RWPE1 (cell line): ENCODE measurements at regions of chr11 and their contacts with region 1.

Region 1: DNA sequence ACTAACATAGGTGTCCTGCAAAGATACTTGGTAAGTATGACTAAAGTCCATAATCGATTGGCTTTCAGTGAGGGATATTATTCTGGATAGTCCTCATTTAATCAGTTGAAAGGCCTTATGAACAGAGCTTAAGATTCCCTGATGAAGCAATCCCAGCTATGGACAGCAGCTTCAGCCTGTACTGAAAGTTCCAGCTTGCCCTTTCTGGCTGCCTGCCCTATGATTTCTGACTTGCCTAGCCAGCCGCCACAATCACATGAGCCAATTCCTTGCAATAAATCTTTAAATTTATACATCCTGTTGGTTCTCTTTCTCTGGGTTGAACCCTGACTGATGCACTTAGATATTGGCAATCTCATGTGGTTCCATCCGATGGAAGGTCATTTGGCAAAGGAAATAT is 759.0 kb upstream of the API5 start:
- DNase-seq: no peak
- H3K27ac ChIP-seq: no peak overlapping the region
- CTCF ChIP-seq: no peak

Region 2: DNA sequence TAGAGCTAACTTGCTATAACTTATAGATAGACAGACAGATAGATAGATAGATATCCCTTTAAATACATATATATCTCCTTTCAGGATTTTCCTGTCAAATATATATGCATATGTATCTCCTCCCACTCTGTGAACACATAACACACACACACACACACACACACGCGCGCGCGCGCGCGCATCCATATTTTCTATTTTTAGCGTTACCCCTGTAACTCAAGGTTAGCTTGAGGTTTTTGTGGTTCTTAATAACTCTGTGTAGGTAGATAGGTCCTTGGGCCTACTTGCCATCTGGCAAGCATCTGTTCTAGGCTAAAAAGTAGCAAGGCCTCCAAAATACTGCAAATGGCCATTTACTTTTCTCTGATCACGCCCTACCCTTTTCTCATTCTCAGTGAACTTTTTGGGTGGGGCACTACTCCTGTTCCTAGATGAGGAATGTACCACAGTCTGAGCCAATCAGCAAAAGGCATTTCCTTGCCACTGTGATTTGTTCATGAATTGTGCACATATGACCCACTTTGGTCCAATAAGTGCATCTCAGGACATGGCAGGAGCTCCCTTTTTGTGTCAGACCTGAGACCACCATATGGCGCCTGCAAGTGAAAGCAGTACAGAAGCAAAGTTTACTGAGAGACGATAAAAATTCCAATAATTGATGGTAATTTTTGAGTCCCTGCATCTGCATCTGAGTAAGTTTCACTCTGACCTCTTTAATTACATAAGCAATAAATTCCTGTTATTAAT is 18.5 kb after region 1 on chr11:
- CTCF ChIA-PET with region 1: interaction called, 10 read pairs
- POLR2A ChIA-PET with region 1: no interaction called
- DNase-seq: no peak
- H3K27ac ChIP-seq: no peak overlapping the region
- CTCF ChIP-seq: no peak